Natural killer cell (primary cell): ENCODE measurements at regions of chr10 and their contacts with region 1.

Region 1: GRCh38 chr10:36324831-36325387 is 682.8 kb upstream of the FZD8 start:
- DNase-seq: no peak
- ATAC-seq: no peak
- H3K4me3 ChIP-seq: no peak overlapping the region
- H3K4me3 Mint-ChIP-seq: no peak overlapping the region
- H3K27ac ChIP-seq: no peak overlapping the region
- H3K27ac Mint-ChIP-seq: no peak overlapping the region
- H3K4me1 ChIP-seq: no peaks in the 10 kb centered on the region
- H3K4me1 Mint-ChIP-seq: no peaks in the 10 kb centered on the region
- H3K27me3 ChIP-seq: no peaks in the 10 kb centered on the region
- H3K27me3 Mint-ChIP-seq: no peaks in the 10 kb centered on the region
- CTCF ChIP-seq: no peak

Region 2: GRCh38 chr10:36283827-36284226 is 41.1 kb before region 1 on chr10:
- intact Hi-C with region 1: loop called (anchors 2 kb)
- DNase-seq: no peak
- ATAC-seq: no peak
- H3K4me3 ChIP-seq: no peak overlapping the region
- H3K4me3 Mint-ChIP-seq: no peak overlapping the region
- H3K27ac ChIP-seq: no peak overlapping the region
- H3K27ac Mint-ChIP-seq: no peak overlapping the region
- H3K4me1 ChIP-seq: no peaks in the 10 kb centered on the region
- H3K4me1 Mint-ChIP-seq: no peaks in the 10 kb centered on the region
- H3K27me3 ChIP-seq: no peaks in the 10 kb centered on the region
- H3K27me3 Mint-ChIP-seq: no peaks in the 10 kb centered on the region
- CTCF ChIP-seq: no peak

Region 3: GRCh38 chr10:36303896-36304295 is 21.0 kb before region 1 on chr10:
- intact Hi-C with region 1: no loop called
- DNase-seq: no peak
- ATAC-seq: no peak
- H3K4me3 ChIP-seq: no peak overlapping the region
- H3K4me3 Mint-ChIP-seq: no peak overlapping the region
- H3K27ac ChIP-seq: no peak overlapping the region
- H3K27ac Mint-ChIP-seq: no peak overlapping the region
- H3K4me1 ChIP-seq: no peaks in the 10 kb centered on the region
- H3K4me1 Mint-ChIP-seq: no peaks in the 10 kb centered on the region
- H3K27me3 ChIP-seq: no peaks in the 10 kb centered on the region
- H3K27me3 Mint-ChIP-seq: no peaks in the 10 kb centered on the region
- CTCF ChIP-seq: no peak